Common myeloid progenitor, CD34-positive (primary cell): ENCODE measurements at regions of chr20 and their contacts with region 1.

Region 1: DNA sequence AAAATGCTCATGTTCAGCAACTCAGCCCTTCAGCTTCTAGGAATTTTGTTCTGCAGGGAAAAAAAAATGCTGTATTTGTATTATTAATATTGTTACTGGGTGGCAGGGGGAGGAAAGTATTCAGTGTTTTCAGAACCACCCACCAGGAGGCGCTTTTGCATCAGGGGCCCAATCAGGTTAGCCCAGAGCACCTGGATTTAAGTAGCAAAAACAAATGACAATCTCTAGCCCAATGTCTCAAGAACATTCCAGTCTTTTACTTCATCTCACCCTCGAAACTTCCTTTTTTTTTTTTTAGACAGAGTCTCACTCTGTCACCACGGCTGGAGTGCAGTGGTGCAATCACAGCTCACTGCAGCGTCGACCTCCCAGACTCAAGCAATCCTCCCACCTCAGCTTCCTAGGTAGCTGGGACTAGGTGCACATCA is 635 bp upstream of the C20orf203 start:
- DNase-seq: peak; percentile 73 to 81 (median 81)
- H3K4me3 ChIP-seq: peak overlapping the region in 2 of 7 experiments; percentile 9 to 54
- H3K27ac ChIP-seq: peak overlapping the region in 1 of 2 experiments; percentile 86
- H3K4me1 ChIP-seq: peaks cover 17 to 93% (median 84%) of the 10 kb centered on the region in 4 experiments
- H3K27me3 ChIP-seq: no peaks in the 10 kb centered on the region

Region 2: DNA sequence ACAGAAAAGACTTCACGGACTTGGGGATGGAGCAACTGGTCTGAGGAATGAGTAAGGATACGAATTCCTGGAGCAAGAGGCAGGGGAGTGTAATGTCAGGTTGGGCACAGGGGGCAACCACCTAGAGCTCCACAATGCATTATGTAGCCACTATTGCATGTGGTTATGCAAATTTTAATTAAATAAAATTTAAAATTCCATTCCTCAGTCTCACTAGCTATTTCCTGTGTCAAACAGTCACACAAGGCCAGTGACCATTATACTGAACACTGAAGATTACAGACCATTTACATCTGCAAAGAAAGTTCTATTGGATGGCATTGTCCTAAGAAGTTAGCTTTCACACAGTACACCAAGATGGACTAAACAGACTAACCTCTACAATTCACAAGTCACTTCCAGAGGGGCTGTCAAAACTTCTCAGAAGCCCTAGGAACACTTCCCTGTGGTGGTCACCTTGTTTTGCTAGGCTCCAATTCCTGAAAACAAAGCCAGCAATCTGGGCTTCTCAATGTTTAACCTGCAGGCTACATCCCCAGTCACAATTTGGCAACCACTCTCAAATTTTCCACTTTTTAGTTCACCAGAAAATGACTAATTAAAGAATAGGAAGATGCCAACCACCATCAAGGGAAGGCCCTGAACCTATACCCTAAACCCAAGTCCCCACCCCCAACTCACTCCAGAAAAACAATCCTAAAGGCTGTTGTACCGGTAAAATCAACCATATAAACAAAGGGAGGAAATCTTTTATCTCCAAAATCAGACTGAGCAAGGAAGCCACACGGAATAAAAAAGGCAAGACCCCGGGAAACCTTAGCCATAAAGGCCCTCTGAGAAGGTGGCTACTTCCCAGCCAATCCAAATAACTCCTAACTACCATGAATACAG is 33.6 kb after region 1 on chr20:
- CTCF ChIA-PET with region 1: interaction called, 28 read pairs
- POLR2A ChIA-PET with region 1: interaction called, 3 read pairs
- DNase-seq: no peak
- H3K4me3 ChIP-seq: no peak overlapping the region
- H3K27ac ChIP-seq: peak overlapping the region in 1 of 2 experiments; percentile 65
- H3K4me1 ChIP-seq: peaks cover 3 to 38% (median 24%) of the 10 kb centered on the region in 4 experiments
- H3K27me3 ChIP-seq: no peaks in the 10 kb centered on the region

Region 3: DNA sequence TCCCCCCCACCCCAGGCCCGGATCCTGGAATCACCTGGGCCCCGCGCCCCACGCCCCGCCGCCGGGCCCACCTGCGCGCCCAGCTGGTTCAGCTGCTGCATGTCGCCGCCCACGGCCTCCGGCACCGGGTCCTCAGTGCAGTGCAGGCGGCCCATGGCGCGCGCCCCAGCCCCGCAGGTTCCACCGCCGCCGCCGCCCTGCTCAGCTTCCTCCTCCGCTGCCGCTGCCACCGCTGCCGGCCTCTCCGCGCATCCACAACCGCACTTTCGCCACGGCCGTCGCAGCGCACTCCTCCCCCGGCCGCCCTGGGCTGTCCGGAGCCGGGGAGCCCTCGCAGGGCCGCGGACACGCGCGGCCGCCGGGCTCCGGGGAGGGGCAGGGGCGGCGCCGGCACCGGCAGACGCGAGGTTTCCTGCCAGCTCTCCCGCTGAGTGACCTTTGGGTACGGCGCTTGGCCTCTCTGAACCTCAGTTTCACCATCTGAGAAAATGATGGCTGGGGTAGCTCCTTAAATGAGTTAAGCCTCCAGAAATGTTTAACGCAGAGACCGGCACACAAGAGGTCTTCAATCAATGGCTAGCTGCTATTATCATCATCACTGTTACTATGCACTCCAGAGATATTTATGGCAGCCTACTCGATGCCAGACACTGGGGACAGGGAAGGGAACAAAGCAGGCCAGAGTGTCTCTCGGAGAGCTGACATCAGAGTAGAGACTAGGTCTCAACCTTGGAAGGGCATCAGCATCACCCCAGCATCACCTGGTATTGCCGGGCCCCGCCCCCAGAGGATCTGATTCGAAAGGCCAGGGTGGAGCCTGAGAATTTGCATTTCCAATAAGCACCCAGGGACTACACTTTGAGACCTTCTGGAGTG is 69.1 kb after region 1 on chr20 and contains the start of gene COMMD7:
- CTCF ChIA-PET with region 1: interaction called, 13 read pairs
- POLR2A ChIA-PET with region 1: interaction called, 8 read pairs
- DNase-seq: peak; percentile 74 to 85 (median 75)
- H3K4me3 ChIP-seq: peak within 1 kb of the TSS; percentile 45 to 96 (median 88)
- H3K27ac ChIP-seq: peak within 1 kb of the TSS; percentile 80 to 93
- H3K4me1 ChIP-seq: peaks cover 10 to 47% (median 32%) of the 10 kb centered on the region in 4 experiments
- H3K27me3 ChIP-seq: no peaks in the 10 kb centered on the region

Region 4: GRCh38 chr20:32762149-32762753 is 87.9 kb after region 1 on chr20 and contains the start of gene DNMT3B:
- CTCF ChIA-PET with region 1: interaction called, 27 read pairs
- POLR2A ChIA-PET with region 1: interaction called, 5 read pairs
- DNase-seq: peak; percentile 65 to 82 (median 78)
- H3K4me3 ChIP-seq: peak within 1 kb of the TSS; percentile 69 to 99 (median 90)
- H3K27ac ChIP-seq: peak within 1 kb of the TSS in 1 of 2 experiments; percentile 76
- H3K4me1 ChIP-seq: peaks cover 12 to 38% (median 32%) of the 10 kb centered on the region in 4 experiments
- H3K27me3 ChIP-seq: no peaks in the 10 kb centered on the region